Activated CD4-positive, alpha-beta memory T cell treated with anti-CD3 and anti-CD28 coated beads, Interleukin-2, amount 10 ng/mL, durations not matched to agents 7 days and 5 days (primary cell): ENCODE measurements at regions of chr7 and their contacts with region 1.

Region 1: DNA sequence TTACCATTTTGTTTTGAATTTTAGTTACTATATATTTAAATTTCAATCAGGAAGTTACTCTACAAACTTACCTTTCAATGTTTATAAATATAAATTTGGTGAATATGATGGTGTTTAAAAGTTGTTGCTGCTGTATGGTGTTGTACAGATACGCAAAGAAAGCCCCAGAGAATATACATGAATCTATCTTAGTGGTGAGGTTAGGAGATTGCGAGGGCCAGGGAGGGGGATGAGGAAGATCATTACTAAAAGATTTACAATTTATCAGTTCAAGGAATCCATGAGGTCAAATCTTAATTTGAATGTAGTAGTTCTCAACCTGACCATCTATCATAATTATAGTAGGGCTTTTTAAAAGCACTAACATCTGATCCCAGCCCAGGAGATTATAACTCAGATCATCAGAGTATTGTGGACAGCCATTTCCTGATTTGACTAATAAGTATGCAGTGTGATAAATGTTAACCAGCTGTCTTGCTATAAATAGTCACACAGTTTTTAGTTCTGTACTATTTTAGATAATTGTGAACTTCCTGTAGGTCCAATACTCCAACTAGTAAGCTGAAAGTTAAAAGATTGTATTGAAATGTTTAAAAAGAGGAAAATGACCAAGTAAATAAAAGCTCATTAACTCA is 23.6 kb downstream of the FAM3C start:
- DNase-seq: no peak
- H3K4me3 Mint-ChIP-seq: peak overlapping the region; percentile 46
- H3K27ac Mint-ChIP-seq: peak overlapping the region; percentile 84
- H3K4me1 Mint-ChIP-seq: peaks cover 56% of the 10 kb centered on the region
- H3K27me3 Mint-ChIP-seq: no peaks in the 10 kb centered on the region

Region 2: DNA sequence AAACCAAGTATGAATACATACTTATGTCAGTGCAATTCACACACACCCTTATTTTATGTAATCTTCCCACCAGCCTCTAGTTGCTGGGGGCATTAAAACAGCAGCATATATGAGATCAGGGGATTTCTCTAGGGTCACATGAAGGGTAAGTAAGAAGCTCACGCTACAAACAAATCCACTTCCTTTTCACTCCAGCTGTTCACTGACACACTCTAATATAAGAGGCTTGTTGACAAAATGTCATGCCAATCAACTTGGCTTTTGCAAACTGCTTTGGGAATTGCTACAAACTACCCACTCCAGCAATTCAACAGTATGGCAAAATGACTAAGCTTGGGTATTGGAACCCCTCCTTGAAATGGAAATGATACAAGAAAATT is 13.3 kb after region 1 on chr7:
- CTCF ChIA-PET with region 1: interaction called, 12 read pairs
- POLR2A ChIA-PET with region 1: interaction called, 6 read pairs
- DNase-seq: no peak
- H3K4me3 Mint-ChIP-seq: no peak overlapping the region
- H3K27ac Mint-ChIP-seq: no peak overlapping the region
- H3K4me1 Mint-ChIP-seq: peaks cover 53% of the 10 kb centered on the region
- H3K27me3 Mint-ChIP-seq: no peaks in the 10 kb centered on the region